ENCODE measurements at regions of chr9 and their contacts with region 1.

Region 1: DNA sequence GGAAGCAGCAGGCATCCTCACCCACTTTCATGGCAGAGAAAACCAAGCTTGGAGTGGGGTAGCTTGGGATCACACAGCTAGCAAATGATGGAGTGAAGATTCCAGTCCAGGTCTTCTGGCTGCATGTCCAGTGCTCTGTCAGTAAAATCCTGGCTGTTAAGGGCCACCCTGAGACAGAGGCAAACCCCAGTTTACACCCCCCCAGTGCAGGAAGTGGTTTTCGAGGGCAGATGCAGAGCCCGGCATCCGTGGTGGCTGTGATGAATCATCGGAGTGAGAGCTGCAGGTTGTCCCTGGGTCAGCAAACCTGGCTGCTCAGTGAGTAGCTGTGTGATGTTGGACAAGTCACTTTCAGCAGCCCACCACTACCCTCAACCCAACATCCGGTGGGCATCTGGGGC is 115.4 kb downstream of the RGS3 start:
- DNase-seq: peak; percentile 91
- H3K4me3 Mint-ChIP-seq: peak overlapping the region; percentile 85
- H3K27ac Mint-ChIP-seq: peak overlapping the region; percentile 96
- H3K4me1 Mint-ChIP-seq: peaks cover 81% of the 10 kb centered on the region
- H3K27me3 Mint-ChIP-seq: no peaks in the 10 kb centered on the region

Region 2: DNA sequence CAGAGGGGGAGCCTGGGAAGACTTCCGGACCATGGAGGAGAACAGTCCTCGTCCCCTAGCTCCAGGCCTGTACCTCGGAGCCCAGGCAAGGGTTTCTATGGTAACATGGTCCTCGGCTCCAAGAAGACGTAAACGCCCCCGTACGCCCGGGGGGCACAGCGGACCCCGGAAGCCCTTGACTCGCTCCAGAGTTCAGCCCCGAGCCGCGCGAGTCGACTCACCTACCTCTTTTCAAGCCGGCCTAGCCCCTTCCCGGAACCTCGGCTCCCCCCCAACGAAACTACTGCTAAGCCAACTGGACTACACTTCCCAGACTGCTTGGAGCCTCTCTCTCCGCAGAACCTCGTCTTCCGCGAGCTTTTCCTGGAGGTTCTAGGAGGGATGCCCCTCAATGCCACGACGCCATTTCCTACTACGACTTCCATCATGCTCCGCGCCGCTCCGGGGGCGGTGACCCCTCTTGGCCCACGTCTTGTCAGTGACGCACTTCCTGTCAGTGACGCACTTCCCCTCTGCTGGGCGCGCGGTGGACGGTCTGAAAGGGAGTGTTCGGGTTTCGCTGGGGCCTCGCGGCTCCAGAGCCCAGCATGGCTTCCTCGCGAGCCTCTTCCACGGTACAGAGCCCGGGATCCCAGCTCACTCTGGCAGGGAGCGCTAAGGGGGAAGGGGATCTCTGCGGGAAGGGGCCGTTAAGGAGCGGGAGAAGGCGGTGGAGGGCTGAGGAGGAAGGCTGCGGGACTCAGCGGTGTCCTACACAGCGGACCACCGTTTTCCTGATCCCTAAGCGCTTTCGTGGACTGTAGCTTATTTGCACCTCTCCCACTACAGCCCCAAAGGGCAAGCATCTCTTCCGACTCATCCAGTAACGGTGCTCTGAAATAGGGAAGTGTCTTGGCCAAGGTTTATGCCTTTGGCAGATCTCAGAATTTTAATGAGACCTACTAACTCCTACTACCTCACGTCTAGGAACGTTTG is 303.4 kb before region 1 on chr9 and contains the starts of genes CDC26 and PRPF4:
- CTCF ChIA-PET with region 1: interaction called, 10 read pairs
- DNase-seq: peak; percentile 98
- H3K4me3 Mint-ChIP-seq: no peak within 1 kb of the TSS
- H3K27ac Mint-ChIP-seq: no peak within 1 kb of the TSS
- H3K4me1 Mint-ChIP-seq: peaks cover 24% of the 10 kb centered on the region
- H3K27me3 Mint-ChIP-seq: no peaks in the 10 kb centered on the region

Region 3: GRCh38 chr9:113446323-113446740 is 132.6 kb before region 1 on chr9:
- CTCF ChIA-PET with region 1: interaction called, 162 read pairs
- DNase-seq: peak; percentile 27
- H3K4me3 Mint-ChIP-seq: no peak overlapping the region
- H3K27ac Mint-ChIP-seq: no peak overlapping the region
- H3K4me1 Mint-ChIP-seq: peaks cover 3% of the 10 kb centered on the region
- H3K27me3 Mint-ChIP-seq: no peaks in the 10 kb centered on the region

Region 4: GRCh38 chr9:113511856-113512761 is 66.8 kb before region 1 on chr9:
- CTCF ChIA-PET with region 1: interaction called, 19 read pairs
- DNase-seq: peak; percentile 79
- H3K4me3 Mint-ChIP-seq: peak overlapping the region; percentile 53
- H3K27ac Mint-ChIP-seq: peak overlapping the region; percentile 96
- H3K4me1 Mint-ChIP-seq: peaks cover 63% of the 10 kb centered on the region
- H3K27me3 Mint-ChIP-seq: peaks cover 3% of the 10 kb centered on the region

Region 5: DNA sequence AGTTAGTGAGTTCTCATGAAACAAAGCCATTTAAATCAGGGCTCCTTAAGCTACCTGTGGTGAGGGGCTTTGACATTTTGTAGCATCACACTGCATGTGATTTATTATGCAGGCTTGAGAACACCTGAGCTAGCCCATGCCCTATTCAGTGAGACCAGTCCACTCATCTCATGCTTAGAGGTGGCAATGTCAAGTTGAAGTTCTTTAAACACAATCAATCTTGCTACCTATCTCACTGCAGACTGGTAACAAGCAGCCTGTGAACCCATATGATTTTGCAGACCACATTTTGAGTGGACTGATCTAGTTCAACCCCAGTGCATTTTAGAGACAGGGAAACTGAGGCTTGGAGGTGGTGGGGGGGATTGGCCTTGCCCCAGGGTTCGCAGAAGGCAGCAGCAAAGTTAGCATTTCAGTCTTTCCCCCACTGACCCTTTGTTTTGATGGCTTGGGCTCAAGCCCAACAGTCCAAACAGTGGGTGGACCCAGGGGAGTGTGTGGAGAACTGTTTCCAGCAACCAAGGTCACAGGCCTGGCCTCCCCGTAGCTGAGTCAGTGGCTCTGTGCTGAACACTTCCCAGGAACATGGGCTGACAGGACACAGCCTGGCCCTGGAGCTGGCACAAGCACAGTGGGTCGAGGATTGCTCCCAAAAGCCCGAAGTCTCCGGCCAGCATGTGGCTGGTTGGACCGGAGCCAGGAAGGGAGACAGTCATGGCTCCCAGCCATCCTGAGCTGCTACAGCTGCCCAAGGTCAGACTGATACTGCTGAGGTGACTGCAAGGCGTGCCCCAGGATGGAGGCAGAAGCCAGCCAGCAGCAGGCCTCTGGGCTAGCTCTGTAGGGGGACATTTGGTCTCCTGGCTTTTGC is 20.0 kb before region 1 on chr9:
- CTCF ChIA-PET with region 1: no interaction called
- DNase-seq: no peak
- H3K4me3 Mint-ChIP-seq: no peak overlapping the region
- H3K27ac Mint-ChIP-seq: no peak overlapping the region
- H3K4me1 Mint-ChIP-seq: peaks cover 18% of the 10 kb centered on the region
- H3K27me3 Mint-ChIP-seq: peaks cover 3% of the 10 kb centered on the region

Region 6: GRCh38 chr9:113591001-113591898 is 12.4 kb after region 1 on chr9:
- CTCF ChIA-PET with region 1: interaction called, 27 read pairs
- DNase-seq: peak; percentile 68
- H3K4me3 Mint-ChIP-seq: no peak overlapping the region
- H3K27ac Mint-ChIP-seq: no peak overlapping the region
- H3K4me1 Mint-ChIP-seq: peaks cover 50% of the 10 kb centered on the region
- H3K27me3 Mint-ChIP-seq: no peaks in the 10 kb centered on the region

Measured in activated naive CD4-positive, alpha-beta T cell treated with anti-CD3 and anti-CD28 coated beads, Interleukin-2, amount 10 ng/mL, durations not matched to agents 7 days and 5 days (primary cell).